ENCODE measurements at regions of chr12 and their contacts with region 1.

Region 1: DNA sequence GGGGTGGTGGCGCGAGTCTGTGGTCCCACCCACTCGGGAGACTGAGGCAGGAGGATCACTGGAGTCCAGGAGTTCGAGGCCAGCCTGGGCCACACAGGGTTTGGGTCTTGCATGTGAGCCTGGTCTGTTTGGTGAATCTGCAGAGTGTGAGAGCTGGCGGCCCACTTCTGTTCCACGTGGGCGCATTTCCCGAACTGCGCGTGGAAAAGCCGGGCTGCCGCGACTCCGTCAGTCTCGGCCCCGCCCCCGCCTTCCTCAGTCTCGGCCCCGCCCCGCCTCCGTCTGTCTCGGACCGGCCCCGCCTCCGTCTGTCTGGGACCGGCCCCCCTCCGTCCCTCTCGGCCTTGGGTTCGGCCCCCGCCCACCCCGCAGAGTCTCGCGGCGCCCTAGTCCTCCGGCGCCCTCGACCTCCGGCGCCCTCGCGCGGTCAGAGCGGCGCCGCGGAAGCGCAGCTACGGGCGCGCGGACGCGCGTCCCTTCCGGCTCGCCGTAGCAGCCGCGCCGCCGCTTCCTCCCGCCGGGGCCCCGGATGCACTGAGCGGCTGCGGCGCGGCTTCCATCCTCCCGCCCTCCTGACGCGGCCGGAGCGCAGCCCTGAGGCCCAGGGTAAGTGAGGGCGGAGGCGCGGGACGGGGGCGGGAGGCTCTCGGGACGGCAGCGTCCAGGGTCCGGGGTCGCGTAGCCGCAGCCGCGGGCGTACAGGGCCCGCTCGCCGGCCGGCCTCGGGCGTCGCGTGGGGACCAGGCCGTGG is at the start of gene EP400:
- DNase-seq: peak; percentile 82 to 98
- H3K4me3 ChIP-seq: peak within 1 kb of the TSS; percentile 76 to 94
- H3K27ac ChIP-seq: peak within 1 kb of the TSS; percentile 83 to 93
- H3K4me1 ChIP-seq: peaks cover 3 to 20% of the 10 kb centered on the region in 2 donors
- H3K27me3 ChIP-seq: no peaks in the 10 kb centered on the region
- CTCF ChIP-seq: peak; percentile 30 to 70 (median 58)
- total RNA-seq, gene EP400: 23.3 TPM

Region 2: GRCh38 chr12:131850856-131851559 is 98.6 kb before region 1 on chr12:
- intact Hi-C with region 1: loop called (anchors 1 kb)
- DNase-seq: peak in 1 of 2 donors; percentile 73
- H3K4me3 ChIP-seq: no peak overlapping the region
- H3K27ac ChIP-seq: no peak overlapping the region
- H3K4me1 ChIP-seq: no peaks in the 10 kb centered on the region
- H3K27me3 ChIP-seq: no peaks in the 10 kb centered on the region
- CTCF ChIP-seq: peak; percentile 50 to 86 (median 84)

Region 3: GRCh38 chr12:131928711-131929580 is 20.7 kb before region 1 on chr12 and contains the start of gene PUS1:
- intact Hi-C with region 1: loop called (anchors 1 kb)
- DNase-seq: peak; percentile 67 to 95
- H3K4me3 ChIP-seq: peak within 1 kb of the TSS; percentile 58 to 80
- H3K27ac ChIP-seq: peak within 1 kb of the TSS; percentile 70 to 74
- H3K4me1 ChIP-seq: peaks cover 8 to 12% of the 10 kb centered on the region in 2 donors
- H3K27me3 ChIP-seq: no peaks in the 10 kb centered on the region
- CTCF ChIP-seq: no peak
- total RNA-seq, gene PUS1: 22.7 TPM

Region 4: DNA sequence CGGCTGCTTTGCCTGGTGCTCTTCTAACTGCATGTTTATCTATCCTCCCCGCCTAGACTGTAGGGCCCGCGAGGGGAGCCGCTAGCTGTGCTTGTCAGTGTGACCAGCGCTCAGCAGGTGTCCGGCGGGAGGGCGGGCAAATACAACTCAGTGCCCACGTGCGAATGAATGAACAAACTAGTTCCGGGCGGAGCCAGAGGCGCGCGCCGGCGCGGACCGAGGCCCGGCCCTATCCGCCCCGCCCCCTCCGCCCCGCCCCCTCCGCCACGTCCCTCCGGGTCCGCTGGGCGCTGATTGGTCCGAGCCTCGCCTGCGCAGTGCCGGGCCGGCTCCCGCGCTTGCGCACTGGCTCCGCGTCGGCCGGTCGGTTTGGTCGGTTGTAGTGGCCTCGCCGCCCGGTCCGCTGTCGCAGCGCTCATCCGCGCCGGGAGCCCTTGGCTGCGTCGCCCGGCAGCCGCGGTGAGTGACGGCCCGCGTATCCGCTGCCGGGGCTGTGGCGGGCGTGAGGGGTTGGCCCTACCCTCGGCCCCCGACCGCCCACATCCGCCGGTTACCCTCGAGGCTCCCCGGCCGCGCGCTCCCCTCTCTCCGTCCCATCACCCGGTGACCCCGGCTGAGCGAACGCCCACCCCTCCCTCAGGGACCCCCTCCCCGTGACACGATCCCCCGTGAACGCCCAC is 134.5 kb after region 1 on chr12:
- intact Hi-C with region 1: loop called (anchors 1 kb)
- DNase-seq: peak; percentile 69 to 94
- H3K4me3 ChIP-seq: peak overlapping the region; percentile 75 to 82
- H3K27ac ChIP-seq: peak overlapping the region; percentile 88 to 93
- H3K4me1 ChIP-seq: peaks cover 4 to 16% of the 10 kb centered on the region in 2 donors
- H3K27me3 ChIP-seq: no peaks in the 10 kb centered on the region
- CTCF ChIP-seq: no peak